ENCODE measurements at regions of chr2 and their contacts with region 1.

Region 1: DNA sequence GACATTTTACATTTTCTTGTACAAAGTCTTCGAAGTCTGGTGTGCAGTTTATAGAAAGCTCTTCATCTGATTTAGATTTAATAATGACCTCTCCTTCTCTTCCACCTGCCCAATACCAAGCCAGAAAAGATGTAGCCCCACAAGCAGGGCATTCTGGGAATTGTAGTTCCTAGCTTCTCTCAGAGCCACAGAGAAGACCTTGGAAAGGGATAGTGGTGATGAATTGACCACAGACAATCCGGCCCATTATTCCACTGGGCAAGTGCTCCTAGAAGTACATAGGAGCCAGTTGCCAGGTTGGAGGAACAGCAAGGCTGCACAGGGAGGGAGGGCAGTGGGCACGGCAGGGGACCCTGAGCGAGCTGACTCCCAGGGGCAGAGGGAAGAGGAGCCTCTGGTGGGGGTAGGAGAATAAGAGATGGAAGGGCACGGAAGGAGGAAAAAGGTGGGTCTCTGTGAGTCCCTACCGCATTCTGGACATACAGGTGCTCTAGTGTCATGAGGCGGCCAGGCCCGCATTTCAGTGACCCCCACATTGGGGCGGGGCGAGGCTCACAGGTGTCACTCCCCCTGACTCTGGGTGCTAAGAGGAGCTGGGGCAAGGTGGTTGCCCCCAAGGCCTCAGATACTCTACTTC is 152.5 kb upstream of the HAAO start:
- DNase-seq: no peak
- ATAC-seq: no peak

Region 2: DNA sequence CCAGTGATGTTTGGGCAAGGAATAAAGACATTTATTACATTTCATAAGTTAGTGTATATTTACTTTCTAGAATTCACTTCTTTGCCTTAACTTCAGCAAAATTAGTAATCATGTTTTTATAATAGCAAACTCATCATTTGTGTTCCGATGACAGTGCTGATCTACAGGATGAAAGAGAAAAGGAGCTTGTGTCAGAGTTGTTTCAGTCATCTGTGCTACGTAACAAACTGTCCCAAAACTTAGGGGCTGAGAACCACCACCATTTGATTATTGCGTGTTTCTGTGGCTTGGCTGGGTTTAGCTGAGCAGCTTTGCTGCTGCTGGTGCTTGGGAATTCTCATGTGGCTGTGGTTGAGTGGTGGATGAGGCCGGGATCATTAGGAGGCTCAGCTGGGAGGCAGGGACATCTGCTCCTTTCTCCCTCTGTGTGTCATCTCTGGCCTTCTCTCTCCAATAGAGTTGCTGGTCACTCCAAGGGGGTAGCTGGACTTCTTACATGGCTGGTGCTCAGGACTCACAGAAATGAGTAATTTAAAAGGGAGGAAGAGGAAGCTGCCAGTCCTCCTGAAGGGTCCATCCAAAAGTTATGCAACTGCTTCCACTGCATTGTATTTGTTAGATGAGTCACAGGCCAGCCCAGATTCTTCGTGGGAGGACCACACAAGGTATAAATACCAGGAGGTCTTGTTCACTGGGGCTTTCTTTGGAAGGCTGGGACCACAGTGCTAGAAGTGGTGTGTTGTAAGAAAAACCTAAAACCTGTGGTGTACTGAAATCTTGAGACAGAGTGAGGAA is 109.1 kb before region 1 on chr2:
- intact Hi-C with region 1: loop called in 1 of 2 experiments (anchors 10 kb)
- DNase-seq: peak; percentile 61
- ATAC-seq: peak; percentile 67 to 86

Measured in left cardiac atrium (tissue), 4 donors.